ENCODE measurements at regions of chr5 and their contacts with region 1.

Region 1: DNA sequence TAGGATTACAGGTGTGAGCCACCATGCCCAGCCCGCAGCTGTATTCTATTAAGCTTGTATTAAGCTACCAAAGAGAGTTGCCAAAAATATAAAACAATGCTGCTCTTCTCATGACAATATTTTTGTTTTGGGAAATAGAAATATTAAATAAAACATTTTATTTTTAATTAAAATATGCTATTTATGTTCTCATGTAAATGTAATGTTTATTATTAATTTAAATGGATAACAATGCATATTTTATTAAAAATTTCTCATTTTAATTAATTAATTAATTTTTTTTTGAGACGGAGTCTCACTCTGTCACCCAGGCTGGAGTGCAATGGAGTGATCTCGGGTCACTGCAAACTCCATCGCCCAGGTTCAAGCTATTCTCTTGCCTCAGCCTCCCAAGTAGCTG is 117.5 kb downstream of the ANKRD55 start:
- DNase-seq: no peak
- ATAC-seq: no peak
- H3K4me3 ChIP-seq: no peak overlapping the region
- H3K27ac ChIP-seq: no peak overlapping the region
- H3K4me1 ChIP-seq: no peaks in the 10 kb centered on the region; the same call in 1 of the 2 replicates
- H3K27me3 ChIP-seq: no peaks in the 10 kb centered on the region
- CTCF ChIP-seq: no peak

Region 2: GRCh38 chr5:55307383-55308253 is 808.0 kb before region 1 on chr5 and contains the starts of genes DHX29 and MTREX:
- CTCF ChIA-PET with region 1: no interaction called
- POLR2A ChIA-PET with region 1: interaction called, 13 read pairs
- in situ Hi-C with region 1: no loop called
- intact Hi-C with region 1: no loop called
- DNase-seq: peak; percentile 79
- ATAC-seq: peak; percentile 99
- H3K4me3 ChIP-seq: peak within 1 kb of the TSS; percentile 85 to 88
- H3K27ac ChIP-seq: peak within 1 kb of the TSS; percentile 98
- H3K4me1 ChIP-seq: peaks cover 29% of the 10 kb centered on the region
- H3K27me3 ChIP-seq: no peaks in the 10 kb centered on the region
- CTCF ChIP-seq: no peak
- total RNA-seq, gene DHX29: 30.1 TPM
- total RNA-seq, gene MTREX: 97.0 TPM

Region 3: GRCh38 chr5:55969956-55970355 is 145.6 kb before region 1 on chr5:
- CTCF ChIA-PET with region 1: no interaction called
- POLR2A ChIA-PET with region 1: no interaction called
- in situ Hi-C with region 1: no loop called
- intact Hi-C with region 1: no loop called
- DNase-seq: no peak
- ATAC-seq: no peak
- H3K4me3 ChIP-seq: no peak overlapping the region
- H3K27ac ChIP-seq: no peak overlapping the region
- H3K4me1 ChIP-seq: no peaks in the 10 kb centered on the region
- H3K27me3 ChIP-seq: no peaks in the 10 kb centered on the region
- CTCF ChIP-seq: no peak

Region 4: GRCh38 chr5:56358703-56359681 is 243.4 kb after region 1 on chr5:
- CTCF ChIA-PET with region 1: no interaction called
- POLR2A ChIA-PET with region 1: no interaction called
- in situ Hi-C with region 1: no loop called
- intact Hi-C with region 1: no loop called
- DNase-seq: no peak
- ATAC-seq: peak; percentile 77
- H3K4me3 ChIP-seq: no peak overlapping the region
- H3K27ac ChIP-seq: peak overlapping the region; percentile 21; the same call in 1 of the 2 replicates
- H3K4me1 ChIP-seq: peaks cover 12% of the 10 kb centered on the region; the same call in 1 of the 2 replicates
- H3K27me3 ChIP-seq: no peaks in the 10 kb centered on the region
- CTCF ChIP-seq: no peak